ENCODE measurements at regions of chr6 and their contacts with region 1.

Region 1: DNA sequence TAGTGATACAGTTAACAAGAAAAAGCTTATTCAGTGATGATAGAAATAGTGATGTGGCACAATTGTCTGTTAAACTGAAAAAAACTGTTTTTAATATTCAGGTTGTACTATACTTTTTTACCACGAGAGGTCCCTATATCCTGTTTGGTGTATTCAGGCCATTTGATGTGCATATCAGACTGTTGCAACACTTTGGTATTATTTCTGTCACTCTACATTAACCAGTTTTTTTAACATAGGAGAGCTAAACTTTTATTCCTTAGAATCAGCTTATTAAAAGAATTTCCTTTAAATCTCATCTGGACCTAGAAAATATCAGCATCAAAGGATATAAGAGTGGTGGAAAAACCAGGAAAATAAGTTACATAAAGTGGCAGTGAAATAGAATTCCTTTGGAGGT is 36.8 kb downstream of the TSPYL4 start:
- DNase-seq: no peak
- H3K4me3 Mint-ChIP-seq: no peak overlapping the region
- H3K27ac Mint-ChIP-seq: no peak overlapping the region
- H3K4me1 Mint-ChIP-seq: peaks cover 4% of the 10 kb centered on the region
- H3K27me3 Mint-ChIP-seq: no peaks in the 10 kb centered on the region

Region 2: GRCh38 chr6:116229287-116229913 is 12.3 kb after region 1 on chr6:
- CTCF ChIA-PET with region 1: interaction called, 11 read pairs
- intact Hi-C with region 1: no loop called
- DNase-seq: peak; percentile 14
- H3K4me3 Mint-ChIP-seq: no peak overlapping the region
- H3K27ac Mint-ChIP-seq: no peak overlapping the region
- H3K4me1 Mint-ChIP-seq: no peaks in the 10 kb centered on the region
- H3K27me3 Mint-ChIP-seq: no peaks in the 10 kb centered on the region

Region 3: DNA sequence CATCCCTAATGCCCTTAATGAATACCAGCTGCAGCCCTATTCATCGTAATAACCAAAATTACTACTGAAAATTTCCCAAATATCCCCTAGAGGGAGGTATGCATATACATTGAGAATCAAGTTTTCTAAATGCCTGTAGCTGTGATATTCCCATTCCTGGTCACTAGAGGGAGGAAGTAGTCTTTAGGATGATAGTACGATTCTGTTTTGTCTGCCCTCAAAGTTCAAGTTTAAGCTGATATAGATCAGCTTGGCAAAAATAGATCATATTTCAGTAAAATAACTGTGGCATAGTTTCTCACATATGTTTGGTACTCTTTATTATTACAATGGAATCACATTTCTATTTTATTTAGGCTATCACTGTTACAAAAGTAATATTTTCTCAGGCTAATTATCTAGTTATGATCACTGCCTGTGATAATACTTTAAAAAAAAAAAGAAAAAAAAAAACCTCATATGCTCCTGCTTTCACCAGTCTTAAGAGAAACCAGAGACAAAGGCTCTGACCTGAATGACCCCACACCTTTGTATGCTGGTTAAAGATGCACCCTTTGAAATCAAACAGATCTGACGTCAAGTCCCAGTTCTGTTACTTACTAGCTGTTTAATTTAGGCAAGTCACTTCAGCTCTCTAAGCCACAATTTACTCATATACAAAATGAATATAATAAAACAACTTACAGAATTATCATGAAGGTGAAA is 51.7 kb after region 1 on chr6:
- CTCF ChIA-PET with region 1: interaction called, 18 read pairs
- intact Hi-C with region 1: loop called (anchors 1 kb)
- DNase-seq: no peak
- H3K4me3 Mint-ChIP-seq: no peak overlapping the region
- H3K27ac Mint-ChIP-seq: no peak overlapping the region
- H3K4me1 Mint-ChIP-seq: peaks cover 27% of the 10 kb centered on the region
- H3K27me3 Mint-ChIP-seq: no peaks in the 10 kb centered on the region

Region 4: DNA sequence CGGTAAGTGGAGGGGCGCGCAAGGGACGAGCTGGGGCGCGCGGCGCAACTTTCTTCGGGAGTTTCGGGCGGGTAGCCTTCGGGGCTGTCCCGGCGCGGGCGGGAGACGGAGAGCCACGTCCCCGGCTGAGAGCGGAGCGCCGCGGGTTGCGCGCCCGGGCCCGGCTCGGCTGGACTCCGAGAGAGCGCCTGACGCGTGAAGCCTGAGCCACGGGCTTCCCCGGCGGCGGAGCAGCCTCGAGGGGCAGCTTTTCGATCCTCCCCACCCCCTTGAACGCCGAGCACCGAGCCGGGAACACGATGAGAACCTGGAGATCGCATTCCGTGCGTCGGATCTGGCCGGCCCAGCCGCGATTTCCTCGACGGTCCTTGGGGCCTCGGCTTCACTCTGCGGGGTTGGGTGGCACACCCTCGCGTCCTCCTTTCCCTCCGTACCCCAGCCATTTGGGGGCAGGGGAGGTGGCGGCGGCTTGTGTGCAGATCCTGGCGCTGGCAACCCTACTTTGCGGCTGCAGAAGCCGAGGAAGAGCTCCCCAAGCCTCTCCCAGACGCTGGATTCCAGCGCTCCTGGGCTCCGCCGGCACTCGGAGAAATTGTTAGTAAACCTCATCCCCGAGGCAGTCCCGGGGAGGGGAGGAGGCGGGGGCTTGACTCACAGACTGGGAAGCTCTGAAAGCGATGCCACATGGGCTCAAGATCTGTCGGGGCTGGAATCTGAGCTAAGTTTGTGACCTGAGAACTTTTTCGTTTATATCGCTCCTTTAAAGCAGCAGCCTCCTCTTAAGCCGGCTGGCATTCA is 154.2 kb after region 1 on chr6:
- CTCF ChIA-PET with region 1: no interaction called
- intact Hi-C with region 1: loop called (anchors 2 kb)
- DNase-seq: peak; percentile 43
- H3K4me3 Mint-ChIP-seq: peak overlapping the region; percentile 71
- H3K27ac Mint-ChIP-seq: no peak overlapping the region
- H3K4me1 Mint-ChIP-seq: peaks cover 8% of the 10 kb centered on the region
- H3K27me3 Mint-ChIP-seq: peaks cover 24% of the 10 kb centered on the region

Region 5: GRCh38 chr6:116444092-116444491 is 227.0 kb after region 1 on chr6:
- CTCF ChIA-PET with region 1: no interaction called
- intact Hi-C with region 1: loop called (anchors 5 kb)
- DNase-seq: no peak
- H3K4me3 Mint-ChIP-seq: no peak overlapping the region
- H3K27ac Mint-ChIP-seq: no peak overlapping the region
- H3K4me1 Mint-ChIP-seq: peaks cover 2% of the 10 kb centered on the region
- H3K27me3 Mint-ChIP-seq: peaks cover 16% of the 10 kb centered on the region

Region 6: GRCh38 chr6:116561377-116562018 is 344.4 kb after region 1 on chr6:
- CTCF ChIA-PET with region 1: interaction called, 3 read pairs
- intact Hi-C with region 1: loop called (anchors 1 kb)
- DNase-seq: peak; percentile 80
- H3K4me3 Mint-ChIP-seq: no peak overlapping the region
- H3K27ac Mint-ChIP-seq: no peak overlapping the region
- H3K4me1 Mint-ChIP-seq: peaks cover 3% of the 10 kb centered on the region
- H3K27me3 Mint-ChIP-seq: peaks cover 11% of the 10 kb centered on the region